HCT116 (cell line): ENCODE measurements at regions of chr17 and their contacts with region 1.

Region 1: GRCh38 chr17:51487947-51488346 is 227.6 kb downstream of the UTP18 start:
- DNase-seq: peak; percentile 77
- ATAC-seq: peak; percentile 100
- H3K4me3 ChIP-seq: peak overlapping the region in 1 of 2 experiments; percentile 5; a peak in 1 of 4 replicates
- H3K27ac ChIP-seq: no peak overlapping the region
- H3K4me1 ChIP-seq: peaks cover 0 to 9% of the 10 kb centered on the region in 2 experiments; a peak in 2 of 4 replicates
- H3K27me3 ChIP-seq: no peaks in the 10 kb centered on the region
- CTCF ChIP-seq: peak; percentile 49 to 93 (median 85); a peak in 5 of 6 replicates
- POLR2A ChIP-seq: no peak
- RAD21 ChIP-seq: peak; percentile 39

Region 2: GRCh38 chr17:51435641-51436091 is 52.3 kb before region 1 on chr17:
- CTCF ChIA-PET with region 1: interaction called, 22 read pairs
- POLR2A ChIA-PET with region 1: no interaction called
- RAD21 ChIA-PET with region 1: no interaction called
- intact Hi-C with region 1: no loop called
- DNase-seq: peak; percentile 85
- ATAC-seq: peak; percentile 97
- H3K4me3 ChIP-seq: no peak overlapping the region
- H3K27ac ChIP-seq: no peak overlapping the region
- H3K4me1 ChIP-seq: peaks cover 9 to 30% of the 10 kb centered on the region in 2 experiments; a peak in 3 of 4 replicates
- H3K27me3 ChIP-seq: no peaks in the 10 kb centered on the region
- CTCF ChIP-seq: peak; percentile 56 to 96 (median 96)
- POLR2A ChIP-seq: no peak
- RAD21 ChIP-seq: peak; percentile 51

Region 3: DNA sequence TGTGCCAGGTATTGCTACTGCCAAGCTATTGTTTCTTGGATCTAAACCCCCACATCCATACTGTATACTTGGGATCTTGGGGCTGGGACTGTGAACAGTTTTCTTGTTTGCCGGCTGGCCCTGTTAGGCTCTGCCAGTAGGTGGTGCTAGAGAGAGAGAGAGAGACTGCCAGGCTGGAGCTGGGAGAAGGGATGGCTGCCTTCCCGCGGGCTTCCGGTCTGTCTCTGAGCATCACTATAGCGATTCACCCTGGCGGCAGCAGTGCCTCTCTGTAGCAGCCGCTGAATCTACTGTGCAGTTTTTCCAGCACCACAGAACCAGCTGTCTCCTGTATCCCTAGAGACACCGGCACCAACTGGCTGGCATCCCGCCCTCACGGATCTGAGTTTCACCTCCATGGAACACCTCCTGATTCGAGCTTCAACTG is 26.4 kb before region 1 on chr17:
- CTCF ChIA-PET with region 1: interaction called, 27 read pairs
- POLR2A ChIA-PET with region 1: no interaction called
- RAD21 ChIA-PET with region 1: no interaction called
- intact Hi-C with region 1: no loop called
- DNase-seq: peak; percentile 78
- ATAC-seq: peak; percentile 97
- H3K4me3 ChIP-seq: no peak overlapping the region
- H3K27ac ChIP-seq: no peak overlapping the region
- H3K4me1 ChIP-seq: peaks cover 0 to 4% of the 10 kb centered on the region in 2 experiments; a peak in 1 of 4 replicates
- H3K27me3 ChIP-seq: peaks cover 16% of the 10 kb centered on the region
- CTCF ChIP-seq: peak; percentile 63 to 100 (median 100); a peak in 5 of 6 replicates
- POLR2A ChIP-seq: no peak
- RAD21 ChIP-seq: peak; percentile 72

Region 4: DNA sequence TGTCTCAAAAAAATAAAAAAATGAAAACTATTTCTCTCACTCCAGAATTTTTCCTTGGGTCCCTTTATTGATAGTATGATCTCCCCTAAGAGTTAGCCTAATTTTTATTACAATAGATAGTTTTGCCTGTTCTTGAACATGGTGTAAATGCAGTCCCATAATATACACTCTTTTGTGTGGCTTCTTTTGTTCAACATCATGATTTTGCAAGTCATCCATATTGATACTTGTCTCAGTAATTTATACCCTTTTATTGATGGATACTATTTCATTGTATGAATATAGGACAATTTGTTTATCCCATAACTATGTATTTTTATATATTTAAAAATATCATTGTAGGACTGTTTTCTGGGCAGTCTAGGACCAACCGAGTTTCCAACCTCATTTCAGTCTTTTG is 20.6 kb before region 1 on chr17:
- CTCF ChIA-PET with region 1: interaction called, 26 read pairs
- POLR2A ChIA-PET with region 1: no interaction called
- RAD21 ChIA-PET with region 1: no interaction called
- intact Hi-C with region 1: no loop called
- DNase-seq: no peak
- ATAC-seq: no peak
- H3K4me3 ChIP-seq: no peak overlapping the region
- H3K27ac ChIP-seq: no peak overlapping the region
- H3K4me1 ChIP-seq: no peaks in the 10 kb centered on the region
- H3K27me3 ChIP-seq: peaks cover 47% of the 10 kb centered on the region
- CTCF ChIP-seq: no peak
- POLR2A ChIP-seq: no peak
- RAD21 ChIP-seq: no peak

Region 5: GRCh38 chr17:51472670-51473205 is 15.2 kb before region 1 on chr17:
- CTCF ChIA-PET with region 1: interaction called, 37 read pairs
- POLR2A ChIA-PET with region 1: no interaction called
- RAD21 ChIA-PET with region 1: no interaction called
- intact Hi-C with region 1: no loop called
- DNase-seq: no peak
- ATAC-seq: no peak
- H3K4me3 ChIP-seq: no peak overlapping the region
- H3K27ac ChIP-seq: no peak overlapping the region
- H3K4me1 ChIP-seq: no peaks in the 10 kb centered on the region
- H3K27me3 ChIP-seq: peaks cover 77% of the 10 kb centered on the region
- CTCF ChIP-seq: no peak
- POLR2A ChIP-seq: no peak
- RAD21 ChIP-seq: no peak

Region 6: GRCh38 chr17:51505450-51505849 is 17.5 kb after region 1 on chr17:
- CTCF ChIA-PET with region 1: interaction called, 10 read pairs
- POLR2A ChIA-PET with region 1: no interaction called
- RAD21 ChIA-PET with region 1: no interaction called
- intact Hi-C with region 1: no loop called
- DNase-seq: no peak
- ATAC-seq: no peak
- H3K4me3 ChIP-seq: no peak overlapping the region
- H3K27ac ChIP-seq: no peak overlapping the region
- H3K4me1 ChIP-seq: no peaks in the 10 kb centered on the region
- H3K27me3 ChIP-seq: peaks cover 88% of the 10 kb centered on the region
- CTCF ChIP-seq: no peak
- POLR2A ChIP-seq: no peak
- RAD21 ChIP-seq: no peak

Region 7: GRCh38 chr17:51957786-51958185 is 469.8 kb after region 1 on chr17:
- CTCF ChIA-PET with region 1: no interaction called
- POLR2A ChIA-PET with region 1: no interaction called
- RAD21 ChIA-PET with region 1: no interaction called
- intact Hi-C with region 1: no loop called
- DNase-seq: no peak
- ATAC-seq: no peak
- H3K4me3 ChIP-seq: no peak overlapping the region
- H3K27ac ChIP-seq: no peak overlapping the region
- H3K4me1 ChIP-seq: no peaks in the 10 kb centered on the region
- H3K27me3 ChIP-seq: no peaks in the 10 kb centered on the region
- CTCF ChIP-seq: no peak
- POLR2A ChIP-seq: no peak
- RAD21 ChIP-seq: no peak